Heart left ventricle (tissue), 16 donors: ENCODE measurements at regions of chr19 and their contacts with region 1.

Region 1: DNA sequence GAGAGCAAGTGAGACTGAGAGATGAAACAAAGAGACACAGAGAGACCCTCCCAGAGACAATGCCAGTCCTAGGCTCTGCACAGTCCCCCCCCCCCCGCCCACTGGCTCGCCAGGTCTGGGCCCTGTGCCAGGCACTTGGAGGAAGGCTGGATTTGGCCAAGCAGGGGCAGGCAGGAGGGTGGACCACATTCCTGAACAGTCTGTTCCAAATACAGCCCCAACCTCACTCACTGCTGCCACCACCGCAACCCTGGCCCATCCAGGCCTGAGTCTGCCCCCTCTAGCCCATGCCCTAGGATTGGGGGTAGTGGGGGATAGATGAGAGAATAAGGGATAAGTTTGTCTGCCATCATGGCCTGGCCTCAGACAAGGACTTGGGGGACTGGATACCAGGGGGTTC is 19.0 kb downstream of the CYP2F1 start:
- DNase-seq: peak in 1 of 5 donors; percentile 31
- ATAC-seq: peak in 1 of 4 donors; percentile 18
- H3K4me3 ChIP-seq: no peak overlapping the region
- H3K27ac ChIP-seq: no peak overlapping the region
- H3K4me1 ChIP-seq: peaks cover 0 to 13% (median under 1%) of the 10 kb centered on the region in 12 donors
- H3K27me3 ChIP-seq: no peaks in the 10 kb centered on the region
- CTCF ChIP-seq: no peak
- POLR2A ChIP-seq: no peak

Region 2: GRCh38 chr19:40813182-40813958 is 319.9 kb before region 1 on chr19:
- intact Hi-C with region 1: loop called in 1 of 10 experiments (anchors 5 kb)
- DNase-seq: no peak
- ATAC-seq: no peak
- H3K4me3 ChIP-seq: no peak overlapping the region
- H3K27ac ChIP-seq: no peak overlapping the region
- H3K4me1 ChIP-seq: peaks cover 4 to 46% (median 31%) of the 10 kb centered on the region in 12 donors
- H3K27me3 ChIP-seq: no peaks in the 10 kb centered on the region
- CTCF ChIP-seq: no peak
- POLR2A ChIP-seq: no peak

Region 3: DNA sequence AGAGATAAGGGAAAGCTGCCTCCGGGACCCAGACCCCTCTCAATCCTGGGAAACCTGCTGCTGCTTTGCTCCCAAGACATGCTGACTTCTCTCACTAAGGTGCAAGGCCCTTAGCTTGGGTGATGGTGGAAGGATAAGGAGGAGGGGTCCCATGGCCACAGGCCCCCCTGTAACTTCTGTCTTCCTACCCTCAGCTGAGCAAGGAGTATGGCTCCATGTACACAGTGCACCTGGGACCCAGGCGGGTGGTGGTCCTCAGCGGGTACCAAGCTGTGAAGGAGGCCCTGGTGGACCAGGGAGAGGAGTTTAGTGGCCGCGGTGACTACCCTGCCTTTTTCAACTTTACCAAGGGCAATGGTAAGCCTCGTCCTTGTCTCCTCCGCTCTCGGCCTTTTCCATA is 17.0 kb before region 1 on chr19:
- intact Hi-C with region 1: no loop called
- DNase-seq: no peak
- ATAC-seq: no peak
- H3K4me3 ChIP-seq: no peak overlapping the region
- H3K27ac ChIP-seq: no peak overlapping the region
- H3K4me1 ChIP-seq: no peaks in the 10 kb centered on the region
- H3K27me3 ChIP-seq: peaks cover 0 to 25% (median 0%) of the 10 kb centered on the region in 9 donors
- CTCF ChIP-seq: no peak
- POLR2A ChIP-seq: no peak